ENCODE measurements at regions of chr5 and their contacts with region 1.

Region 1: DNA sequence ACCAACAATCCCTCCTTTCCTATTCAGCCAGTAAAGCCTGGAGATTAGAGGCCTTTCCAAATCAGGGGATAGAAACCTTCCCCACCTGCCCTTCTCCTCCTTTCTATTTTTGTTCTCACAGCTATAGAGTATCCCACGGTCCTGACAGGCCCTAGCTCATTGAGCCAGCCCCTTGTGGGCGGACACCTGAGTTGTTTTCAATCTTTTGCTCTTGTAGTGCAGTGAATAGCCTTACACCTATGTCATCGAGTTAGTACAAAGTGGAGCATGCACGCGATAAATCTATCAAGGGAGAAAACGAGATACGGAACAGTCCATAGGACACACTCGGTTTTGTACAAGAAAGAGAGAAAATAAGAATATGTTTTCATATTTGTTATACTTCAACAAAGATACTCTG is 77.2 kb downstream of the TSPAN17 start:
- DNase-seq: no peak
- ATAC-seq: no peak
- H3K4me3 ChIP-seq: no peak overlapping the region
- H3K27ac ChIP-seq: no peak overlapping the region
- H3K4me1 ChIP-seq: no peaks in the 10 kb centered on the region
- H3K27me3 ChIP-seq: peaks cover 62% of the 10 kb centered on the region
- CTCF ChIP-seq: no peak
- POLR2A ChIP-seq: no peak
- RAD21 ChIP-seq: no peak

Region 2: DNA sequence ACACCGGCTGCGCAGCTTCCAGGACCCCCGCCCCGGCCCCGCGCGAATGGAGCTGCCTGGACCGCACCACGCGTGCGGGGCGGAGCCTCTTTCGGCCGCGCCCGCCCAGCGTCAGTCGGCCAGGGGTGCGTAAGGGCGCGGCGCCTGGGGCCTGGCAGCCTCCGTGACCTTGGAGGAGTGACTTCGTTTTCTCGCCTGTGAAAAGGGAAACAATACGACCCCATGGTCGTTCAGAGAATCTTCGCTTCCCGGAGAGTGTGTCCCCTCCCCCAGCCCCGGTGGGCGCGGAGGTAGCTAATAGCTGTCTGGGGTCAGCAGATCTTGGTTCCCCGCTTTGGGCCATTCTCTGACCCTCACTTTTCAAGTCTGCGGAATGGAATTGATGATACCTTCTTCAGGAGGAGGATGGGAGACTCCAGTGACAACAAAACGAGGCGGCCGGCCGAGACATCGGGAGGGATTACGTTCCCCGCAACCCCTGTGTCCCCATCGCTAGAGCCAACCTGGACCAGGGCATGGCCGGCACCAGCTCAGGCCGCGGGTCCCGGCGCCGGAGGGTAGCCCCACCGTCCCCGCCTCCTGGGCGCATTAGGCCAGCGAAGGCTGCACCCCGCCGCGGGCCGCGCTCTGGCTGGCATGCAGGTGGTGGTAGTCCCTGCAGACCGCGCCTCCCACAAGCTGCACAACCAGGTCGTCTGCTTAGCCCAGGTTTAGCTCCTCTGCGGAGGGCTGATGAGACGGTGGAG is 180.9 kb before region 1 on chr5:
- CTCF ChIA-PET with region 1: no interaction called
- POLR2A ChIA-PET with region 1: no interaction called
- dilution Hi-C with region 1: no loop called
- in situ Hi-C with region 1: no loop called
- intact Hi-C with region 1: no loop called
- DNase-seq: no peak
- ATAC-seq: peak; percentile 89
- H3K4me3 ChIP-seq: peak overlapping the region; percentile 46
- H3K27ac ChIP-seq: no peak overlapping the region
- H3K4me1 ChIP-seq: peaks cover 9% of the 10 kb centered on the region
- H3K27me3 ChIP-seq: no peaks in the 10 kb centered on the region; the same call in 1 of the 2 replicates
- CTCF ChIP-seq: no peak
- POLR2A ChIP-seq: no peak
- RAD21 ChIP-seq: no peak

Region 3: GRCh38 chr5:176744584-176744965 is 20.1 kb after region 1 on chr5:
- CTCF ChIA-PET with region 1: no interaction called
- POLR2A ChIA-PET with region 1: no interaction called
- dilution Hi-C with region 1: no loop called
- in situ Hi-C with region 1: no loop called
- intact Hi-C with region 1: no loop called
- DNase-seq: no peak
- ATAC-seq: no peak
- H3K4me3 ChIP-seq: no peak overlapping the region
- H3K27ac ChIP-seq: no peak overlapping the region
- H3K4me1 ChIP-seq: no peaks in the 10 kb centered on the region
- H3K27me3 ChIP-seq: peaks cover 83% of the 10 kb centered on the region
- CTCF ChIP-seq: peak; percentile 17; the same call in 1 of the 2 replicates
- POLR2A ChIP-seq: no peak
- RAD21 ChIP-seq: no peak

Region 4: GRCh38 chr5:176762489-176762888 is 38.0 kb after region 1 on chr5:
- CTCF ChIA-PET with region 1: no interaction called
- POLR2A ChIA-PET with region 1: no interaction called
- dilution Hi-C with region 1: no loop called
- in situ Hi-C with region 1: no loop called
- intact Hi-C with region 1: loop called (anchors 1 kb)
- DNase-seq: peak; percentile 16
- ATAC-seq: no peak
- H3K4me3 ChIP-seq: no peak overlapping the region
- H3K27ac ChIP-seq: no peak overlapping the region
- H3K4me1 ChIP-seq: no peaks in the 10 kb centered on the region
- H3K27me3 ChIP-seq: peaks cover 3% of the 10 kb centered on the region
- CTCF ChIP-seq: no peak
- POLR2A ChIP-seq: no peak
- RAD21 ChIP-seq: no peak